Mammary epithelial cell (primary cell): ENCODE measurements at regions of chr3 and their contacts with region 1.

Region 1: DNA sequence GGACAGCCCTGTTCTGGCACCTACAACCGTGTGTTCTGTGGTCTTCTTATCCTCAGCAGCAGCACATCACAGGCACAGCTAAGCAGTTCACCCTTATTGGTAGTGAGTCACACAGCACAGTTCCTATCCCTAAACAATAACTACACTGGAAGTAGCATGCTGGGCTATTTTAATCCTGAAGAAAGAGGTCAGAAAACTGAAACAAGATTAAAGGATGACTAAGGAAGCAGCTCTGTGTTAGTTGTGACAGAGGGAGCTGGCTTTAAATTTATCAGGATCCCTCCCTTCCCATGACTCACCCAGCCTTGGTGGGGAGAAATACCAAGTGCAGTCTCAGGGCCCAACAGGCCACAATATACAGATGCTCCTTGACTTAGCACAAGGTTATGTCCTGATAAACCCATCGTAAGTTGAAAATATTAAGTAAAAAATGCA is 144.3 kb downstream of the ERC2 start:
- DNase-seq: peak; percentile 66
- H3K4me3 ChIP-seq: no peak overlapping the region
- H3K27ac ChIP-seq: no peak overlapping the region
- H3K4me1 ChIP-seq: no peaks in the 10 kb centered on the region
- H3K27me3 ChIP-seq: no peaks in the 10 kb centered on the region
- CTCF ChIP-seq: no peak

Region 2: GRCh38 chr3:56219894-56220805 is 103.9 kb before region 1 on chr3:
- CTCF ChIA-PET with region 1: no interaction called
- dilution Hi-C with region 1: loop called (anchors 5 kb)
- in situ Hi-C with region 1: no loop called
- intact Hi-C with region 1: no loop called
- DNase-seq: no peak
- H3K4me3 ChIP-seq: no peak overlapping the region
- H3K27ac ChIP-seq: no peak overlapping the region
- H3K4me1 ChIP-seq: no peaks in the 10 kb centered on the region
- H3K27me3 ChIP-seq: no peaks in the 10 kb centered on the region
- CTCF ChIP-seq: no peak

Region 3: DNA sequence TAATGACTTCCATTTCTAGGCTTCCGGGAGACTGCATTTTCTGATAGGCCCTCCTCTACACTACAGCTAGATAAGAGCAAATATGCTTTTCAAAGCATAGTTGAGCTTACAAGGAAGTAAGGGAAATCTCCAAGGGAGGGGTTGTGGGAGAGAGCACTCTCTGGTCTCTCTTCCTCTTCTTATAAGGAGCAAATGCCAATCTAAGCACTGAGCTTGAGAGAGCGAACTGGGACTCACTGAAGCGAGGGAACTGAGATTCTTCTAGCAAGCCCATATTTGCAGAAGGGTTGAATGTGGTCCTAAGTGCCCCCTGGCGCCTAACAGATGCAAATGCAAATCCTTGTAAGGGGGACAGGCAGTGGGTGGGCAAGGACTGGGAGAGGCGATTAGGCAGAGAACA is 20.5 kb before region 1 on chr3:
- CTCF ChIA-PET with region 1: no interaction called
- dilution Hi-C with region 1: no loop called
- in situ Hi-C with region 1: no loop called
- intact Hi-C with region 1: no loop called
- DNase-seq: no peak
- H3K4me3 ChIP-seq: no peak overlapping the region
- H3K27ac ChIP-seq: no peak overlapping the region
- H3K4me1 ChIP-seq: no peaks in the 10 kb centered on the region
- H3K27me3 ChIP-seq: no peaks in the 10 kb centered on the region
- CTCF ChIP-seq: peak; percentile 32 to 33